ENCODE measurements at regions of chr11 and their contacts with region 1.

Region 1: GRCh38 chr11:122085264-122085663 is 30.8 kb downstream of the BLID start:
- DNase-seq: peak; percentile 91
- H3K4me3 ChIP-seq: no peak overlapping the region
- H3K27ac ChIP-seq: peak overlapping the region; percentile 73
- H3K4me1 ChIP-seq: peaks cover 19% of the 10 kb centered on the region
- H3K27me3 ChIP-seq: no peaks in the 10 kb centered on the region
- CTCF ChIP-seq: no peak

Region 2: DNA sequence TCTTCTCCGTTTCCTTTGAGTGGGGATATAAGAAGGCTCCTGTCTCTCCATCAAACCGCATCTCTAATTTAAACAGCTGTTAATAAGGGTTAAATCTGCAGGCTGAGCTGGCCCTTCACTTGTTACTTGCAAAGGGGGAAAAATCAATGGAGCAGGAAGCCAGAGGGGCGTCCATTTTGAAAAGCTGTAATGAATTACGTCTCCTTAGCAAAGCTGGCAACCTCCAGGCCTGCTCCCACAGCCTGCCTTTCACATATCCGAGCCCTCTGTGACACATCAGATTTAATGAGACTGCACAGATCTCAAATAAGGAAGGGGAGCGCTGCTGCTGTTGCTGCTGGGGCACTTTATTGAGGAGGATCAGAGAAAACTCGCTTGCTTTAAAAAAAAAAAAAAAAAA is 290.1 kb before region 1 on chr11:
- CTCF ChIA-PET with region 1: no interaction called
- POLR2A ChIA-PET with region 1: no interaction called
- intact Hi-C with region 1: no loop called
- DNase-seq: no peak
- H3K4me3 ChIP-seq: no peak overlapping the region
- H3K27ac ChIP-seq: no peak overlapping the region
- H3K4me1 ChIP-seq: peaks cover 17% of the 10 kb centered on the region
- H3K27me3 ChIP-seq: no peaks in the 10 kb centered on the region
- CTCF ChIP-seq: no peak

Region 3: GRCh38 chr11:122165607-122166371 is 80.5 kb after region 1 on chr11:
- CTCF ChIA-PET with region 1: no interaction called
- POLR2A ChIA-PET with region 1: interaction called, 14 read pairs
- intact Hi-C with region 1: no loop called
- DNase-seq: no peak
- H3K4me3 ChIP-seq: no peak overlapping the region
- H3K27ac ChIP-seq: no peak overlapping the region
- H3K4me1 ChIP-seq: peaks cover 10% of the 10 kb centered on the region
- H3K27me3 ChIP-seq: no peaks in the 10 kb centered on the region
- CTCF ChIP-seq: no peak